ENCODE measurements at regions of chr6 and their contacts with region 1.

Region 1: GRCh38 chr6:32589598-32590449 is at the start of gene HLA-DRB1:
- DNase-seq: no peak
- H3K4me3 Mint-ChIP-seq: peak within 1 kb of the TSS; percentile 44
- H3K27ac Mint-ChIP-seq: no peak within 1 kb of the TSS
- H3K4me1 Mint-ChIP-seq: no peaks in the 10 kb centered on the region
- H3K27me3 Mint-ChIP-seq: peaks cover 7% of the 10 kb centered on the region
- total RNA-seq, gene HLA-DRB1: 4.1 to 4.2 TPM

Region 2: GRCh38 chr6:32522302-32523047 is 67.3 kb before region 1 on chr6:
- CTCF ChIA-PET with region 1: no interaction called
- intact Hi-C with region 1: loop called (anchors 2 kb)
- DNase-seq: no peak
- H3K4me3 Mint-ChIP-seq: no peak overlapping the region
- H3K27ac Mint-ChIP-seq: no peak overlapping the region
- H3K4me1 Mint-ChIP-seq: no peaks in the 10 kb centered on the region
- H3K27me3 Mint-ChIP-seq: peaks cover 3% of the 10 kb centered on the region

Region 3: DNA sequence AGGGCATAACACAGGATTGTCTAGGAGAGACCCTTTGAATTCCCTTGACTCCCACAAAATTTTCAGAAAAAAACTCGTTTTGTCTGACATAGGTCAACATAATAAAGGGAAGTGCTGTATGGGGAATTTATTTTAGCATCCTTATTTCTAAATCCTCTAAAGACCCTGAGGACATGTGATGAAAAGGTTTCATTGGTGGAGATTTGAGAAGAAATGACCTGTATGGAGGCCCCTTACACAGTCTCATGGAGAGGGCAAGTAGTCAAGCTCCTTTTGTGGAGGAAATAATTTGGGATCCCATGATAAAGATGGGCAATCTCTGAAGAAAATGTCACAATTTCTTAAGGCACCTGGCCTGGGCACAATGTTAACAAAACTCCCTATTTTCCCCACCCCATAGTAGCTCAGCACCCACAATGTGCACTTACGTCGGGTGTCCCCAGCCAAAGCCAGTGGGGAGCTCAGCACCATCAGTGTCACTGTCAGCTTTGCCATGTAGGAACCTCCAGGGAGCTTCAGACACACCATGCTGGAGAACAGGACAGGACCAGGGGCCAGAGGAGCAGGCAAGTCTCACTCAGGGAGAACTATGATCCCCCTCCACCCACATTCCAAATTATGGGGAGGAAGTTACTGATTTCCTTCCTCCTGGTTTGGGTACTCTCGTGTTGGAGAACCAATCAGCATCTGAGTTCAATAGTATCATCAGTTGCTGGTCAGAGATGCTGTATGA is 60.0 kb before region 1 on chr6 and contains the start of gene HLA-DRB5:
- CTCF ChIA-PET with region 1: no interaction called
- intact Hi-C with region 1: loop called (anchors 2 kb)
- DNase-seq: peak; percentile 3
- H3K4me3 Mint-ChIP-seq: peak within 1 kb of the TSS; percentile 38
- H3K27ac Mint-ChIP-seq: no peak within 1 kb of the TSS
- H3K4me1 Mint-ChIP-seq: no peaks in the 10 kb centered on the region
- H3K27me3 Mint-ChIP-seq: no peaks in the 10 kb centered on the region
- total RNA-seq, gene HLA-DRB5: 0.33 to 0.42 TPM

Region 4: GRCh38 chr6:32558426-32559057 is 31.3 kb before region 1 on chr6:
- CTCF ChIA-PET with region 1: no interaction called
- intact Hi-C with region 1: loop called (anchors 1 kb)
- DNase-seq: peak; percentile 4
- H3K4me3 Mint-ChIP-seq: no peak overlapping the region
- H3K27ac Mint-ChIP-seq: no peak overlapping the region
- H3K4me1 Mint-ChIP-seq: no peaks in the 10 kb centered on the region
- H3K27me3 Mint-ChIP-seq: peaks cover 2% of the 10 kb centered on the region